HCT116 (cell line): ENCODE measurements at regions of chr17 and their contacts with region 1.

Region 1: DNA sequence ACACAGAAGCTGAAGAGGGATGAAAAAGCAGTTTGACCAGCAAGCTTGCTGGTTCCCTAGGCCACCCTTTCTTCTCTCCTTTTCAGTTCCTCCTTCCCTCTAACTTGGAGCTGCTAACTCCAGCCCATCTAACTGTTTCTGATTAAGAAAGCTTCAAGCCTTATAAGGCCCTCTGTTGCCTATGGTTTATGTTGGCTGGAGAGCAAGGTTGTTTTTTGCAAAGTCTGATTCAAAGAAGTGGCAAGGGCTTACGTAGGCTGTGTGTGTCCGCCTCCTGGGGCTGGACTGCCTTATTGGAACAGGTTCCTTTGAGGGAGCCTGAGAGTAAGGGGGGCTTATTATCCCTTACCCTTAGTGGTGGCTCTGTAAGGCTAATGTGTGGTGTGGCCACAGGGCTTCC is 7.1 kb downstream of the AKAP1 start:
- DNase-seq: no peak
- ATAC-seq: no peak
- H3K4me3 ChIP-seq: no peak overlapping the region
- H3K27ac ChIP-seq: no peak overlapping the region
- H3K4me1 ChIP-seq: peaks cover 9 to 16% of the 10 kb centered on the region in 2 experiments; a peak in 3 of 4 replicates
- H3K27me3 ChIP-seq: no peaks in the 10 kb centered on the region
- CTCF ChIP-seq: no peak
- POLR2A ChIP-seq: no peak
- RAD21 ChIP-seq: no peak

Region 2: DNA sequence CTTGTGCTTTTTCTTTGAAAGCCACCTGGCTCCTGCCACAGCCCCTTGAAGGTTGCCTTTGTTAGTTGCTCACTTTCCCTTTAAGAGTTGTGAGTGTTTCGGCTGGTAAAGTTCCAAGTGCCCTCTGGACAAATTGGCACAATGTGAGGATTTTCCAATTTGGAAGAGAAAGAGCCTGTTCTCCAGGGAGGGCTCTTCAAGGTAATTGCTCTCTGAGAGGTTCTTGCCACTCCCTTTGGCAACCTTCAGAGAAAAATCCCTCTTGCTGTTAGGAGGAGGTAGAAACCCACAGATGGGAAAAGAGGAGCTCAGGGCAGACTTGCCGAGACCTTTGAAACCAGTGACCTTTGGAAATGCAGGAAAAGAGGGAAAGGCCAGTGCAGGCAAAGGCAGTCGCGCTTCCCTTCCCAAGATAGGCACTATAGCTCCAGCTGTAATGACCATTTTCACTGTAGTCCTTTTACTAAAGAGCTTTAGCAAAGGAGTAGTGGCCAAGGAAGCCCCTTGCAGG is 56.1 kb before region 1 on chr17:
- CTCF ChIA-PET with region 1: no interaction called
- POLR2A ChIA-PET with region 1: no interaction called
- RAD21 ChIA-PET with region 1: no interaction called
- intact Hi-C with region 1: no loop called
- DNase-seq: no peak
- ATAC-seq: no peak; the same call in 1 of the 2 replicates
- H3K4me3 ChIP-seq: no peak overlapping the region
- H3K27ac ChIP-seq: no peak overlapping the region
- H3K4me1 ChIP-seq: peaks cover 16 to 17% of the 10 kb centered on the region in 2 experiments; a peak in 2 of 4 replicates
- H3K27me3 ChIP-seq: peaks cover 19% of the 10 kb centered on the region; the same call in 1 of the 2 replicates
- CTCF ChIP-seq: no peak
- POLR2A ChIP-seq: no peak
- RAD21 ChIP-seq: no peak

Region 3: GRCh38 chr17:57080441-57081080 is 11.6 kb before region 1 on chr17:
- CTCF ChIA-PET with region 1: no interaction called
- POLR2A ChIA-PET with region 1: no interaction called
- RAD21 ChIA-PET with region 1: no interaction called
- intact Hi-C with region 1: no loop called
- DNase-seq: no peak
- ATAC-seq: no peak
- H3K4me3 ChIP-seq: no peak overlapping the region
- H3K27ac ChIP-seq: no peak overlapping the region
- H3K4me1 ChIP-seq: peaks cover 0 to 12% of the 10 kb centered on the region in 2 experiments; a peak in 2 of 4 replicates
- H3K27me3 ChIP-seq: no peaks in the 10 kb centered on the region
- CTCF ChIP-seq: no peak
- POLR2A ChIP-seq: no peak
- RAD21 ChIP-seq: no peak

Region 4: DNA sequence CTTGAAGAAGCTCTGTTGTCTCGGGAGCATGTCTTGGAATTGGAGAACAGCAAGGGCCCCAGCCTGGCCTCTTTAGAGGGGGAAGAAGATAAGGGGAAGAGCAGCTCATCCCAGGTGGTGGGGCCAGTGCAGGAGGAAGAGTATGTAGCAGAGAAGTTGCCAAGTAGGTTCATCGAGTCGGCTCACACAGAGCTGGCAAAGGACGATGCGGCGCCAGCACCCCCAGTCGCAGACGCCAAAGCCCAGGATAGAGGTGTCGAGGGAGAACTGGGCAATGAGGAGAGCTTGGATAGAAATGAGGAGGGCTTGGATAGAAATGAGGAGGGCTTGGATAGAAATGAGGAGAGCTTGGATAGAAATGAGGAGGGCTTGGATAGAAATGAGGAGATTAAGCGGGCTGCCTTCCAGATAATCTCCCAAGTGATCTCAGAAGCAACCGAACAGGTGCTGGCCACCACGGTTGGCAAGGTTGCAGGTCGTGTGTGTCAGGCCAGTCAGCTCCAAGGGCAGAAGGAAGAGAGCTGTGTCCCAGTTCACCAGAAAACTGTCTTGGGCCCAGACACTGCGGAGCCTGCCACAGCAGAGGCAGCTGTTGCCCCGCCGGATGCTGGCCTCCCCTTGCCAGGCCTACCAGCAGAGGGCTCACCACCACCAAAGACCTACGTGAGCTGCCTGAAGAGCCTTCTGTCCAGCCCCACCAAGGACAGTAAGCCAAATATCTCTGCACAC is 14.1 kb after region 1 on chr17:
- CTCF ChIA-PET with region 1: interaction called, 16 read pairs
- POLR2A ChIA-PET with region 1: interaction called, 14 read pairs
- RAD21 ChIA-PET with region 1: interaction called in 1 of 2 experiments, 3 read pairs
- intact Hi-C with region 1: no loop called
- DNase-seq: peak; percentile 64
- ATAC-seq: peak; percentile 71
- H3K4me3 ChIP-seq: peak overlapping the region in 1 of 2 experiments; percentile 52; a peak in 1 of 4 replicates
- H3K27ac ChIP-seq: peak overlapping the region; percentile 89
- H3K4me1 ChIP-seq: peaks cover 63 to 71% of the 10 kb centered on the region in 2 experiments
- H3K27me3 ChIP-seq: no peaks in the 10 kb centered on the region
- CTCF ChIP-seq: peak; percentile 61 to 96 (median 81); a peak in 5 of 6 replicates
- POLR2A ChIP-seq: no peak
- RAD21 ChIP-seq: peak; percentile 61